Activated CD4-positive, alpha-beta T cell treated with anti-CD3 and anti-CD28 coated beads, Interleukin-2, amount 10 ng/mL, durations not matched to agents 24 days and 14 days (primary cell): ENCODE measurements at regions of chr14 and their contacts with region 1.

Region 1: DNA sequence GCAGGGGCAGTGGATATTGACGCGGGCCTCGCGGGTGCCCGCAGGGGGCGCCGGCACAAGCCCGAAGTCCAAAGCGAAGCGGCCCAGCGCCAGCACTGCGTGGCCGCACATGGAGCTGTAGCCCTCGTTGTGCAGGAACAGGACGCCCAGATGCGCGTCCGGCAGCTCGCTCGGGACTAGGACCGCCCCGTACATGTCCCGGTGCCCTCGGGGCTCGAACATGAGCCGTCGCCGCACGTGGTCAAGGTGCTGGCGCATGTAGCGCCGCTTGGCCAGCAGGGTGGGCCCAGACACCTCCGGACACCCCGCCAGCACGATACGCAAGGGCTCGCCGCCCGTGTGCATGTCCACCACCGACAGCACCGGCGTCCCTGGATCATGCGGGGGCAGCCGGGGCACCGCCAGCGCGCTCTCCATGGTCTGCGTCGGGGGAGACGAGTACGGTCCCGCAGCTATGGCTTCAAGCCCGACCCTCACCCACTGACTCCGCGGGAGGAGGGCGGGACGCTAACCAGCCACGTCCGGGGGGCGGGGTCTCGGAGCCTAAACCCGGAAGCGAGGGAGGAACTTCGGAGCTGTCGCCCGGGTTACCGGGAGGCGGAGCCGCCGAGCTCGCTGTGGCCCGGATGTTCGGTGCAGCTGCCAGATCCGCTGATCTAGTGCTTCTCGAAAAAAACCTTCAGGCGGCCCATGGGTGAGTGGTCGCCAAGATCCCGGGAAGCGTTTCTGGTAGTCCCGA is at the starts of genes JKAMP and L3HYPDH:
- DNase-seq: peak; percentile 99
- H3K4me3 Mint-ChIP-seq: peak within 1 kb of the TSS; percentile 96
- H3K27ac Mint-ChIP-seq: peak within 1 kb of the TSS; percentile 93
- H3K4me1 Mint-ChIP-seq: peaks cover 53% of the 10 kb centered on the region
- H3K27me3 Mint-ChIP-seq: no peaks in the 10 kb centered on the region
- total RNA-seq, gene JKAMP: 27.9 and 28.6 TPM in 2 replicates
- total RNA-seq, gene L3HYPDH: 20.8 TPM in 2 replicates

Region 2: DNA sequence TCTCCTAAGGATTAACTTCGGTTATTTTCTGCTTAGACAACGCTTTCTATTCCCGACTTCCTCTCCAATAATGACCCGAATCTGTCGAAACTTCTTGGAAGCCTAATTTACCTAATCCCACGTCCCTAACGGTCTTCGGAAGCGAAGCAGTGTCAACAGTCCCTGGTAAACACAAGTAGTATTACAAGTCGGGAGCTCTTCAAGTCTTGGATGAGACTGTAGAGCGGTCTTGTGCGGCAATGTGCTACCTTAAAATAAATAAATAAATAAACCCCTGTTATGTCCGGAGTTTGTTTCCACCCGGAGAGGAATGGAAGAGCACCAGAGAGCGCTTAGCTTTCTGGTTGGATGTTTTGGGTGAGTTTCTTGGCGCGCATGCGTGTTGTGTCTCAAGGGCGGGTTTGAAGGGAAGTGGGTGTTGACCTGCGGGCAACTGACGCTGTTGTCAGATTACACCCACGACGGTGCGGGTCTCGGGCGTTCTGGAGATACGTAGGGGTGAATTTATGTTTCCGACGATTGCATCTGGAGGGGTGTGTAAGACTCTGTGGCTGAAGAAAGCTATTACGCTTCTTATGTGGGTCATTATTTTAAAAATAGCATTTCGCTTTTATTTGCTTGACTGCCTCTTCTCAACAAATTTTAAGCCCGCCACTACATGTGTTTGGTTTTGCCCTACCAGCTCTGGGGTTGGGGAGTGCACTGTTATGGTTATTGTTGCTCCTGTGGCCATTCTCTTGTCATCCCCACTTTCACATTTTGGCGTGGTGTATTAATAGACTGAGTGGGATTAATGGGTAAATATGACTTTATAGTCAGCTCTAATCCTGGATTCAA is 1056.6 kb before region 1 on chr14 and contains the starts of genes KIAA0586 and TIMM9:
- intact Hi-C with region 1: loop called (anchors 2 kb)
- DNase-seq: peak; percentile 98
- H3K4me3 Mint-ChIP-seq: peak within 1 kb of the TSS; percentile 79
- H3K27ac Mint-ChIP-seq: peak within 1 kb of the TSS; percentile 94
- H3K4me1 Mint-ChIP-seq: peaks cover 31% of the 10 kb centered on the region
- H3K27me3 Mint-ChIP-seq: peaks cover 2% of the 10 kb centered on the region
- total RNA-seq, gene KIAA0586: 19.8 and 20.9 TPM in 2 replicates
- total RNA-seq, gene TIMM9: 67.7 and 71.8 TPM in 2 replicates

Region 3: DNA sequence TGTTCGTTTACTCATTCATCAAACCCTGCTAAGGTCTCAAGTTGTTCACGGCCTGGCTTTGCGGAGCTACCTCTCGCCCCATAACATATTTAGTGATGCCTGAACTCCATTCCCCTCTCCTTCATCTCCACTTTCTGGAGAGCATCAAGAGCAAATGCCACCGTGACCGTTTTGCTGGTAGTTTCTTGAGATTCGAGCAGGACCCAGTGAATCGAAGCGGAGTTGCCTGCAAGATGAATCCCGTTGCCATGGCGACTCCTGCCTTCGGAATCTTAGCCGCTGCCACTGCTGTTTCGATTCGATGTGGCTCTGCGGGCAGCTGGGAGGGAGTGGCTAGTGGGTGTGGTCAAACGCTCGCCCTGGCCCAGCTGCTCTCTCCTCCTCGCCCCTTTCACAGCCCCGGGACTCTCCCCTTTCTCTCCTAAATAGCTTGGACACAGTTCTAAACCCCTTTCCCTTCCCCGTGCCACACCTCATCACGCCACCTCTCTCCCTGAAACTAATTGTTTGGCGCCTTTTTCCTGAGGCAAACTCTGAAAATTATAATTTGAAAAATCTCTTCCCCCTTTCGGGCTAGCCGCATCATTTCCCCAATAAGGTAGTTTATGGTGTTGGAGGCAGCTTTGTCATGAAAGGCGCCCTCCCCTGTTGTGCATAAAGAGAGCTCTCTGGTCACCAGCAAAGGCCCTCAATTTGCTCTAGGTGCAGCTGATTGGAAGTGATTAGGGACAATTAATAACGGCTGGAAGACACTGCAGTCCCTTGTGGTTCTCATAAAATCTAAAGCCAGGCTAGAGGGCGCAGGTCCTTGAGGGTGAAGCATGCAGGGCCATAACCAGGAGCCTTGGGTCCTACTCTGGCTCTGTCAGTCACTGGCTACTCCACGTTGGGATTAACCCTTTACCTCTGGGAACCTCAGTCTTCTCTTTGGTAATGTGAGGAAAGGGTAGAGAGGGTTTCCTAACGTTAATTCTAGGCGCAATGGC is 294.0 kb before region 1 on chr14:
- intact Hi-C with region 1: loop called (anchors 1 kb)
- DNase-seq: peak; percentile 94
- H3K4me3 Mint-ChIP-seq: peak overlapping the region; percentile 98
- H3K27ac Mint-ChIP-seq: peak overlapping the region; percentile 73
- H3K4me1 Mint-ChIP-seq: peaks cover 16% of the 10 kb centered on the region
- H3K27me3 Mint-ChIP-seq: peaks cover 19% of the 10 kb centered on the region

Region 4: GRCh38 chr14:59464486-59465315 is 19.4 kb before region 1 on chr14:
- intact Hi-C with region 1: loop called (anchors 1 kb)
- DNase-seq: peak; percentile 85
- H3K4me3 Mint-ChIP-seq: peak overlapping the region; percentile 86
- H3K27ac Mint-ChIP-seq: peak overlapping the region; percentile 54
- H3K4me1 Mint-ChIP-seq: peaks cover 6% of the 10 kb centered on the region
- H3K27me3 Mint-ChIP-seq: peaks cover 13% of the 10 kb centered on the region

Region 5: DNA sequence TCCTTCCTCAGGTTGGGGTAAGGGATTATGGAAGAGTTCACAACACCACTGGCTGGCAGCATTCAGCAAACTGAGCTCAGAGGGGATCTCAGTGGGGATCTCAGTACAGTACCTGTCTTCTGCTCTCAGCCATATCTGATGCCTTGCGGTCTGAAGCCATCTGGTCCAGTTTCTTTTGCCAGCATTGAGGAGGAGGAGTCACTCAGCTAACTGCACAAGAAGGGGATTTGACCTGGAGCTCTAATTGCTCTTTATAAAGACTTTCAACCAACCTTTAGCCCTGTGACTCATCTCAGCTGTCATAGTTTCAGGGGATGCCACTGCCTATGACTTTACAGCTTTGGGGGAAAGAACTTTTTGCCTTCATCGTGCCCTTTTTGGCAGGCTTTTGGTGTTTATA is 45.1 kb after region 1 on chr14:
- intact Hi-C with region 1: no loop called
- DNase-seq: no peak
- H3K4me3 Mint-ChIP-seq: no peak overlapping the region
- H3K27ac Mint-ChIP-seq: no peak overlapping the region
- H3K4me1 Mint-ChIP-seq: no peaks in the 10 kb centered on the region
- H3K27me3 Mint-ChIP-seq: peaks cover 19% of the 10 kb centered on the region

Region 6: GRCh38 chr14:60164712-60165546 is 680.9 kb after region 1 on chr14 and contains the start of gene DHRS7:
- intact Hi-C with region 1: loop called (anchors 10 kb)
- DNase-seq: peak; percentile 89
- H3K4me3 Mint-ChIP-seq: peak within 1 kb of the TSS; percentile 98
- H3K27ac Mint-ChIP-seq: peak within 1 kb of the TSS; percentile 99
- H3K4me1 Mint-ChIP-seq: peaks cover 30% of the 10 kb centered on the region
- H3K27me3 Mint-ChIP-seq: no peaks in the 10 kb centered on the region
- total RNA-seq, gene DHRS7: 42.9 TPM in 2 replicates

Region 7: GRCh38 chr14:60980811-60981632 is 1497.0 kb after region 1 on chr14 and contains the starts of genes SLC38A6 and TRMT5:
- intact Hi-C with region 1: loop called (anchors 5 kb)
- DNase-seq: peak; percentile 98
- H3K4me3 Mint-ChIP-seq: no peak within 1 kb of the TSS
- H3K27ac Mint-ChIP-seq: no peak within 1 kb of the TSS
- H3K4me1 Mint-ChIP-seq: peaks cover 21% of the 10 kb centered on the region
- H3K27me3 Mint-ChIP-seq: no peaks in the 10 kb centered on the region
- total RNA-seq, gene SLC38A6: 4.7 and 5.9 TPM in 2 replicates
- total RNA-seq, gene TRMT5: 16.1 and 18.0 TPM in 2 replicates